T-cell (primary cell): ENCODE measurements at regions of chr15 and their contacts with region 1.

Region 1: DNA sequence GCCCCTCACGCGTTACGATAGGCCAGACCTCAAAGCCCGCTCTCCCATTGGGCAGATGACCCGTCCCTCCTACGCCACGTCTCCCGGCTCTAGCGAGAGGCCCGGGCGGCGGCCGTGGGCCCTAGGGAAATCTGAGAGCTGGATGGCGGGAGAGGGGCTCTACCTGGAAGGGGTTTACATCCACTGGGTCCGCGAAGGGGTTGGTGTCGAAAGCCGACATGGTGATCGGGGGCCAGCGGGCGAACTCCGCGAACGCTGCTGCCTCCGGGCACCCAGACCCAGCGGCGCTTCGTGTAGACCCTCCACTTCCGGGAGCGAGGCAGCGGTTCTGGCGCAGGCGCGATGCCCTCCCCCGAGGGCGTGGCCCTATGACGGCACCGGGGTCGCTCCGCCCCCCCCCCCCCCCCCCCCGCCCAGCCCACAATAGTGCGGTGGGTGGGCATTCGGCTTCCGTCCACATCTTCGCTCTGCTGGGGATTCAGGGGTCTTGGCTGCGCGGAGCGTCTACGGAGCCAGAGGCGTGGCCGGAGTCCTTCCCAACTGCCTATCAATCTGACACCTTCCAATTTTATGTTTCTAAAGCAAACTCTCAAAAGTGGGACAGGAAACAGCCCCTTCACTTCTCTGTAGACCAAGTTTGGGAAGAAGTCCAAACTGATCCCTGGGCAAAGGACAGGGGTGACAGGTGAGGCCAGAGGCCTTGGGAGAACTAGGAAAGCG is at the start of gene SCAMP2:
- DNase-seq: peak; percentile 82 to 94 (median 89)
- ATAC-seq: peak; percentile 93 to 95 (median 94)
- H3K4me3 ChIP-seq: peak within 1 kb of the TSS; percentile 91 to 99
- H3K4me3 Mint-ChIP-seq: peak within 1 kb of the TSS; percentile 97 to 99 (median 99)
- H3K27ac ChIP-seq: peak within 1 kb of the TSS; percentile 98
- H3K27ac Mint-ChIP-seq: peak within 1 kb of the TSS; percentile 93 to 95
- H3K4me1 ChIP-seq: peaks cover 25 to 54% of the 10 kb centered on the region in 2 experiments
- H3K4me1 Mint-ChIP-seq: peaks cover 50 to 53% (median 51%) of the 10 kb centered on the region in 3 donors
- H3K27me3 ChIP-seq: no peaks in the 10 kb centered on the region
- H3K27me3 Mint-ChIP-seq: no peaks in the 10 kb centered on the region
- total RNA-seq, gene SCAMP2: 76.8 to 141 (median 134) TPM

Region 2: GRCh38 chr15:74589826-74590225 is 283.4 kb before region 1 on chr15:
- CTCF ChIA-PET with region 1: interaction called in 1 of 2 experiments, 10 read pairs
- POLR2A ChIA-PET with region 1: no interaction called
- DNase-seq: no peak
- ATAC-seq: no peak
- H3K4me3 ChIP-seq: no peak overlapping the region
- H3K4me3 Mint-ChIP-seq: no peak overlapping the region
- H3K27ac ChIP-seq: no peak overlapping the region
- H3K27ac Mint-ChIP-seq: no peak overlapping the region
- H3K4me1 ChIP-seq: no peaks in the 10 kb centered on the region
- H3K4me1 Mint-ChIP-seq: no peaks in the 10 kb centered on the region
- H3K27me3 ChIP-seq: no peaks in the 10 kb centered on the region
- H3K27me3 Mint-ChIP-seq: no peaks in the 10 kb centered on the region

Region 3: DNA sequence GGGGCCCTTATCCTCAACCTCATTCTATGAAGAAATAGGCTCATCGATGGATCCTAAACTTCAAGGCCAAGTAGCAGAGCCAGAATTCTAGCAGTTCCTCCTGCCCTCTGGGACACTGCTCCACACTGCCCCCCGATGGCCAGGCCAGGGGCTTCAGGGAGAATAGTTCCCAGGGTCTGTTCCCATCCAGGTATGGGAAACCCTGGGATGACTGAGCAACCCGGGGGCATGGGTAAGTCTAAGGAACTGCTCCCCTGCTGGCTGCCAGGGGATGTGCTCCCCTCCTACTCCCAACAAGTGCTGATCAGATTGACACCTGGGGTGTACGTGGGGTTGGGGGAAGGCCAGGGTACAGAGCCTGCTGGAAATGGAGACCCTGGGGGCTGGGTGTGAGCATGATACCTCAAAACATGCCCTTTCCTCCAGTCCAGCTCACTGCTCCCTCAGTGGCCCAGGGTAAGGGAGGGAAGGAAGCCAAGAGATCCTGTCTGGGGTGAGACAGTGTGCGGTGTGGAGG is 37.8 kb before region 1 on chr15:
- CTCF ChIA-PET with region 1: no interaction called
- POLR2A ChIA-PET with region 1: no interaction called
- DNase-seq: peak in 18 of 35 experiments; percentile 13 to 56 (median 22)
- ATAC-seq: peak; percentile 36 to 66 (median 54)
- H3K4me3 ChIP-seq: no peak overlapping the region
- H3K4me3 Mint-ChIP-seq: no peak overlapping the region
- H3K27ac ChIP-seq: no peak overlapping the region
- H3K27ac Mint-ChIP-seq: peak overlapping the region in 1 of 2 donors; percentile 31
- H3K4me1 ChIP-seq: peaks cover 0 to 5% of the 10 kb centered on the region in 2 experiments
- H3K4me1 Mint-ChIP-seq: peaks cover 0 to 8% (median 6%) of the 10 kb centered on the region in 3 donors
- H3K27me3 ChIP-seq: no peaks in the 10 kb centered on the region
- H3K27me3 Mint-ChIP-seq: no peaks in the 10 kb centered on the region

Region 4: DNA sequence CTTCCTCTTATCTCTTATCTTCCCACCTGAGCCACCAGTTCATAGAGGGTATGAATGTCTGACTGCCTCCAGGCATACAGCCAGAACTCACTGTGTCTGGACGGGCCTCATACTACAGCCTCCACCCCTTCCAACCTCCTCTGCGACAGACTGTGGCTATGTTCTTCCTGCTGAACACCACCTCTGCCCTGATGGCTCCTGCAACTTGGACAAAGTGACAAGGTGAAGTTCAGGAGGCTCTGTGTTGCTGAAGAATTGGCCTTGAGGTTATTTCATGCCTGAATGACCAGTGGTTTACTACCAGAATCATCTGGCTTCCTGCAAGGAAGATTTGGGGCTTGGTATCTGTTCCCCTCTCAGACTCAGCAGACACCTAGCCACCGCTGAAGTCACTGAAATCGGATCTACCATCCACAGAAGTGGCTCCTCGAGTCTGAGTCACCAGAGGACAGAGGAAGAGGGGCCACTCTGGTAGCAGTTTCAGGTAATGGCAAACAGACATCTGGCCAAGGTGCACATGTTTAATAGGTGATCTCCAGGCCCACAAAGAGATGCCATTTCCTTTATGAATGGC is 16.0 kb before region 1 on chr15:
- CTCF ChIA-PET with region 1: interaction called in 1 of 2 experiments, 11 read pairs
- POLR2A ChIA-PET with region 1: interaction called in 1 of 2 experiments, 3 read pairs
- DNase-seq: no peak
- ATAC-seq: peak in 1 of 4 experiments; percentile 55
- H3K4me3 ChIP-seq: no peak overlapping the region
- H3K4me3 Mint-ChIP-seq: no peak overlapping the region
- H3K27ac ChIP-seq: peak overlapping the region; percentile 13
- H3K27ac Mint-ChIP-seq: peak overlapping the region; percentile 81 to 83
- H3K4me1 ChIP-seq: peaks cover 9 to 44% of the 10 kb centered on the region in 2 experiments
- H3K4me1 Mint-ChIP-seq: peaks cover 37 to 42% (median 41%) of the 10 kb centered on the region in 3 donors
- H3K27me3 ChIP-seq: no peaks in the 10 kb centered on the region
- H3K27me3 Mint-ChIP-seq: no peaks in the 10 kb centered on the region

Region 5: GRCh38 chr15:75532413-75533147 is 659.4 kb after region 1 on chr15:
- CTCF ChIA-PET with region 1: no interaction called
- POLR2A ChIA-PET with region 1: no interaction called
- DNase-seq: peak in 1 of 35 experiments; percentile 23
- ATAC-seq: no peak
- H3K4me3 ChIP-seq: no peak overlapping the region
- H3K4me3 Mint-ChIP-seq: no peak overlapping the region
- H3K27ac ChIP-seq: no peak overlapping the region
- H3K27ac Mint-ChIP-seq: peak overlapping the region in 1 of 2 donors; percentile 40
- H3K4me1 ChIP-seq: no peaks in the 10 kb centered on the region
- H3K4me1 Mint-ChIP-seq: peaks cover 13 to 34% (median 18%) of the 10 kb centered on the region in 3 donors
- H3K27me3 ChIP-seq: no peaks in the 10 kb centered on the region
- H3K27me3 Mint-ChIP-seq: no peaks in the 10 kb centered on the region